B cell (primary cell): ENCODE measurements at regions of chr3 and their contacts with region 1.

Region 1: GRCh38 chr3:11803977-11804892 is 42.5 kb downstream of the TAMM41 start:
- DNase-seq: peak; percentile 55
- ATAC-seq: peak; percentile 75
- H3K4me3 ChIP-seq: no peak overlapping the region
- H3K4me3 Mint-ChIP-seq: no peak overlapping the region
- H3K27ac ChIP-seq: no peak overlapping the region
- H3K27ac Mint-ChIP-seq: no peak overlapping the region
- H3K4me1 ChIP-seq: no peaks in the 10 kb centered on the region
- H3K4me1 Mint-ChIP-seq: no peaks in the 10 kb centered on the region
- H3K27me3 ChIP-seq: no peaks in the 10 kb centered on the region
- H3K27me3 Mint-ChIP-seq: no peaks in the 10 kb centered on the region
- CTCF ChIP-seq: peak; percentile 82

Region 2: DNA sequence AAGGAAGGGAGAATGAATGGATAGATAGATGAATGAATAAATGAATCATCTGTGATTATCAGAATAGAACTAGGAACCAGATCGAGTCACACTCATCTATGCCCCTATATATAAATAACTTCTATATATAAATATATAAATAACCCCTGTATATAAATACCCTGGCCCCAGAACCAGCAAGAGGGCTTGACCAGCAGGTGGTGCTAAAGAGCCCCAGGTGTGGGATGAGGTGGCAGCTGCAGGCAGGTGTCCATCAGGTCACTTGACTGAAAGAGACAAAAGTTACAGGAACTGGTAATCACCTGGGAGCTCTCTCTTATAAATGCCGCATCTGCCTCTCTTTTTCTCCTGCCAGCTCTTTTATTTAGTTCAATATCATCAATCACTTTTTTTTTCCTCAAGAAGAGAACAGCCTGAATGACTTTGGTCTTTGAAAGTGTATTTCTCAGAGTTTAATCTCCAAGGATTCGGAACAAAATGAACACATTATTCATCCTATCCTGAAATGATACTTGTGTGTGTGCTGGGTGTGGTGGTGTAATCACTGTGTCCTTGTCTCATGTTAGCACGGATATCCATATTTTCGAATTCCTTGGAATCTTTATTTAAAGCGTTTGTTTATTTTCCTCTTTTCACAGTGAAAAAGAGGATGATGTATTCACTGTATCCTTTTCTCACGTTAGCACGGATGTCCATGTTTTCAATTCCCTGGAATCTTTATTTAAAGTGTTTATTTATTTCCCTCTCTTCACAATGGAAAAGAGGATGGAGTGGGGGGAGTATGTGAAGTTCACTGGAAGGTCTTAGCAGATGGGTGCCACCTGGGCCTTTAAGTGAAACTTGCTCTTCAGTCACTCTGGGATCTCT is 567.4 kb before region 1 on chr3:
- CTCF ChIA-PET with region 1: no interaction called
- POLR2A ChIA-PET with region 1: no interaction called
- intact Hi-C with region 1: loop called (anchors 5 kb)
- DNase-seq: peak; percentile 78
- ATAC-seq: peak; percentile 79
- H3K4me3 ChIP-seq: no peak overlapping the region
- H3K4me3 Mint-ChIP-seq: no peak overlapping the region
- H3K27ac ChIP-seq: no peak overlapping the region
- H3K27ac Mint-ChIP-seq: no peak overlapping the region
- H3K4me1 ChIP-seq: no peaks in the 10 kb centered on the region
- H3K4me1 Mint-ChIP-seq: no peaks in the 10 kb centered on the region
- H3K27me3 ChIP-seq: peaks cover 0 to 5% (median 2%) of the 10 kb centered on the region in 4 experiments
- H3K27me3 Mint-ChIP-seq: peaks cover 30% of the 10 kb centered on the region
- CTCF ChIP-seq: peak; percentile 97